Gastrocnemius medialis (tissue), 4 donors: ENCODE measurements at regions of chr6 and their contacts with region 1.

Region 1: GRCh38 chr6:25250878-25251277 is 28.3 kb upstream of the CARMIL1 start:
- DNase-seq: no peak
- ATAC-seq: no peak
- H3K4me3 ChIP-seq: no peak overlapping the region
- H3K27ac ChIP-seq: no peak overlapping the region
- H3K4me1 ChIP-seq: no peaks in the 10 kb centered on the region
- H3K27me3 ChIP-seq: no peaks in the 10 kb centered on the region
- CTCF ChIP-seq: no peak
- POLR2A ChIP-seq: no peak

Region 2: GRCh38 chr6:25179051-25179778 is 71.7 kb before region 1 on chr6:
- in situ Hi-C with region 1: no loop called
- intact Hi-C with region 1: no loop called
- DNase-seq: no peak
- ATAC-seq: peak; percentile 54 to 55
- H3K4me3 ChIP-seq: no peak overlapping the region
- H3K27ac ChIP-seq: peak overlapping the region; percentile 53 to 76 (median 56)
- H3K4me1 ChIP-seq: no peaks in the 10 kb centered on the region
- H3K27me3 ChIP-seq: no peaks in the 10 kb centered on the region
- CTCF ChIP-seq: no peak
- POLR2A ChIP-seq: no peak

Region 3: DNA sequence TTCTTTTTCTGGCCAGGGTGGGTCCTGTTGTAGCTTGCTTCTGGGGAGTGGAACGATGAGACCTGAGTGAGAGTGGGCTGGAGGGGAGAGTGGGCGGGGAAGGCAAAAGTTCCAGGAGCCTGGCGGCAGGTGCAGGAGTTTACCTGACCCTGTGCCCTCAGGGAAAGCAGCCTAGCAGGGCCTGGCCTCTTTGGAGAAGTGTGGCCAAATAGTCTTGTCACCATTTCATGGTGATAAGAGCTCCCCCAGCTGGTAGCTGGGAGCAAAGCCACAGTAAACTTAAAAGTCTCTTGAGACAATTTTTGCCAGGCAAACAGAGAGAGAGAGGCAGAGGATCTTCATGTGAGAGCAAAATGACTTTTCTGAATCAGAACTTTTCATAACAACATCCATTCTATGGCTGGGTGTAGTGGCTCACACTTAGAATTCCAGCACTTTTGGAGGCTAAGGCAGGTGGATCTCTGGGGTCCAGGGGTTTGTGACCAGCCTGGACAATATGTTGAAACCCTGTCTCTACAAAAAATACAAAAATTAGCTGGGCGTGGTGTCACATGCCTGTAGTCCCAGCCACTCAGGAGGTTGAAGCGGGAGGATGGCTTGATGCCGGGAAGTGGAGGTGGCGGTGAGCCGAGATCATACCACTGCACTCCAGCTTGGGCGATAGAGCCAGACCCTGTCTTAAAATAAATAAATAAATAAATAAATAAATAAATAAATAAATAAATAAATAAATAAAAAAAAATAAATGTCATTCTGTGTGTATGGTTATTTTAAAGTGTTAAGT is 239.3 kb after region 1 on chr6:
- in situ Hi-C with region 1: loop called in 1 of 4 experiments (anchors 25 kb)
- intact Hi-C with region 1: no loop called
- DNase-seq: peak; percentile 22 to 37
- ATAC-seq: peak; percentile 33 to 58
- H3K4me3 ChIP-seq: no peak overlapping the region
- H3K27ac ChIP-seq: no peak overlapping the region
- H3K4me1 ChIP-seq: no peaks in the 10 kb centered on the region
- H3K27me3 ChIP-seq: no peaks in the 10 kb centered on the region
- CTCF ChIP-seq: peak; percentile 18 to 44 (median 37)
- POLR2A ChIP-seq: no peak

Region 4: GRCh38 chr6:25556516-25556915 is 305.6 kb after region 1 on chr6:
- in situ Hi-C with region 1: loop called in 2 of 4 experiments (anchors 25 kb)
- intact Hi-C with region 1: no loop called
- DNase-seq: peak; percentile 11 to 39
- ATAC-seq: no peak
- H3K4me3 ChIP-seq: no peak overlapping the region
- H3K27ac ChIP-seq: no peak overlapping the region
- H3K4me1 ChIP-seq: no peaks in the 10 kb centered on the region
- H3K27me3 ChIP-seq: no peaks in the 10 kb centered on the region
- CTCF ChIP-seq: peak in 3 of 5 experiments; percentile 38 to 62 (median 58)
- POLR2A ChIP-seq: no peak

Region 5: GRCh38 chr6:25641940-25642666 is 391.2 kb after region 1 on chr6:
- in situ Hi-C with region 1: no loop called
- intact Hi-C with region 1: no loop called
- DNase-seq: no peak
- ATAC-seq: no peak
- H3K4me3 ChIP-seq: no peak overlapping the region
- H3K27ac ChIP-seq: no peak overlapping the region
- H3K4me1 ChIP-seq: no peaks in the 10 kb centered on the region
- H3K27me3 ChIP-seq: peaks cover 0 to 2% (median 0%) of the 10 kb centered on the region in 3 donors
- CTCF ChIP-seq: no peak
- POLR2A ChIP-seq: no peak

Region 6: GRCh38 chr6:25981568-25982263 is 730.8 kb after region 1 on chr6:
- in situ Hi-C with region 1: no loop called
- intact Hi-C with region 1: no loop called
- DNase-seq: no peak
- ATAC-seq: no peak
- H3K4me3 ChIP-seq: no peak overlapping the region
- H3K27ac ChIP-seq: no peak overlapping the region
- H3K4me1 ChIP-seq: no peaks in the 10 kb centered on the region
- H3K27me3 ChIP-seq: no peaks in the 10 kb centered on the region
- CTCF ChIP-seq: no peak
- POLR2A ChIP-seq: no peak